ENCODE measurements at regions of chr2 and their contacts with region 1.

Region 1: DNA sequence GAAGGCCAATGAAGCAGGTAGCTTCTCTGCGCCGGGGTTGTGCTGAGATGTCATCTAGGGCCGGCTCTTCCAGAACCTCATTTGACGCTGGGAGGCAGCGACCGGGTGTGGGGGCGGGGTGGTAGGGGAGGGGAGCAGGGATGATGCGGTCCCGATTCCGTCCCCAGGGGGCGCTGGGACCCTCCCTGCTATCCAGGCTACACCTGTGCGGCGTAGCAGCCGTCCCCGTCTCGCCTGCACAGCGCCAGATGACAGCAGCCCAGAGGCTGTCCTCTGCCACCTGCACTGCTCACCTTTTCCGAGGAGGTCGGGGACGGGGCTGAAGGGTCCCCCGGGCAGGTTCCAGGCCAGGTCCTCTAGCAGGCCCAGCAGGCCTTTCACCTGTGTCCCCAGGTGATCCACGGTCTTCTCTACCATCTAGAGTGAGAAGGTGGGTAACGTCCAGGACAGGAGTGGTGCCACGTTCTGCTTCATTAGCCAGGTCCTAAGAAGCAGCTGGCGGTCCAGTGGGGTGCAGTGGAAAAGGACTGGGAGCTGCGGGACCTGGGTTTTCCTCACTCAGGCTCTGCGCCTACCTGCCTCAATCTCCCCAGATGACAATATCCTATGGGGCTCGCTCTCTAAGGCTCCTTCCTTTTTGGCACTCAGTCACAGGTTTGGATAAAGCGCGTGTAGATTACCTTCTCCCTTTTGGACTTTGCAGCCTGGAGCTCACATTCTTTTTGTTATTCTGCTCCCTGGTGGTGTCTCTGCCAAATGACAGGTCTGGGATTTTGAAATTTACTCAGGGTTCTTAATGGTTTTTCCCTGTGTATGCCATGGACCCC is 56.0 kb upstream of the RAB6C start:
- DNase-seq: peak; percentile 82
- H3K4me3 ChIP-seq: peak overlapping the region in 1 of 2 experiments; percentile 28; a peak in 1 of 4 replicates
- H3K27ac ChIP-seq: no peak overlapping the region
- H3K4me1 ChIP-seq: peaks cover 0 to 11% of the 10 kb centered on the region in 2 experiments; a peak in 1 of 4 replicates
- H3K27me3 ChIP-seq: no peaks in the 10 kb centered on the region
- CTCF ChIP-seq: peak; percentile 56
- EP300 ChIP-seq: no peak
- RAD21 ChIP-seq: peak; percentile 84

Region 2: DNA sequence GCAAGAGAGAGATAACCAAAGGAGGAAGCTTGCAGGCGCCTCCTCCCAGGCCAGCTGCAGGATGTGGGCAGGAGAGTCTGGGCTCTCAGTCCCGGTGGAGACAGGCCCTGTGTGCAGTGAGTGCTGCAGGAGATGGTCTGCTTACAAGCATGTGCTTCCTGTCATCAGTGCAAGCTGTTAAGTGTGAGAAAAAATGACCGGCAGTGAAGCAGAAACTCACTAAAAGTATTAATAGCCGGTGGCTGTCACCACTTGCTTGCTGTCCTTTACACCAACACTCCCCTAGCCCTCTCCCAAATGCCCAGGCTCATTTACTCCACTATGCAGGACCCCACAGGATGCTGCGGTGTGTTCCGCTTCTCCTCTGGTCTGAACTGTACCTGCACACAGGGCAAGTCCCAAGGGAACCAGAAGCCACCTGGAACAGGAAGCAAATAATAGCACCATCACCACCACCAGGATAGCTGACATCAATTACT is 1169.2 kb before region 1 on chr2:
- CTCF ChIA-PET with region 1: interaction called, 10 read pairs
- POLR2A ChIA-PET with region 1: no interaction called
- DNase-seq: peak; percentile 48
- H3K4me3 ChIP-seq: no peak overlapping the region
- H3K27ac ChIP-seq: no peak overlapping the region
- H3K4me1 ChIP-seq: peaks cover 0 to 11% of the 10 kb centered on the region in 2 experiments; a peak in 1 of 4 replicates
- H3K27me3 ChIP-seq: no peaks in the 10 kb centered on the region
- CTCF ChIP-seq: no peak
- EP300 ChIP-seq: no peak
- RAD21 ChIP-seq: no peak

Region 3: DNA sequence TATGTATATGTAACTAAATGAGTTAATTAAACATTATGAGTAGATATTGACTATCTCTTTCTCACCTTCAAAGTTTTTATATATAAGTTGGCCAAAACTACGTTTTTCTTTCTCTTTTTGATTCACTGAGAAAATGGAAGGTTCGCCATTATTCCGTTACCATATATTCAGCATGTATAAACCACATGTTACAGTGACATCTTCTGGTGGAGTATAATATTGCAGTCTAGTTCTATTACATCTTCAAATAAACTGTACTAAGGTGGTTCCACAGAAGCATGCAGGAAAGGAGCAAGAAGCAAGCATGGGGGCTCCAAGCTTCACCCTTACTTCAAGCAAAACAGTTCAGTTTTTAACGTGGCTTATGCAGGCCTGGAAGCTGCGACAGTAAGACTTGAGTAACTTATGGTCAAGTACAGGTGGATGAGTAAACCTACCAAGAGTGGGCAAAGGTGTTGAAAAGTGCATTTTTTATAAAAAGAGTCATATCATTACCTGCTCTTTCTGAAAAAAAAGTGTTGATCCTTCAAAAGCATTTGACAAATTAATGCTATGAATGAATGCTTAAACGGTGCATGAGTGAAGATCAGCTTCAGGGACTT is 73.8 kb before region 1 on chr2:
- CTCF ChIA-PET with region 1: interaction called, 10 read pairs
- POLR2A ChIA-PET with region 1: no interaction called
- DNase-seq: peak; percentile 60
- H3K4me3 ChIP-seq: peak overlapping the region in 1 of 2 experiments; percentile 20; a peak in 1 of 4 replicates
- H3K27ac ChIP-seq: no peak overlapping the region
- H3K4me1 ChIP-seq: no peaks in the 10 kb centered on the region
- H3K27me3 ChIP-seq: no peaks in the 10 kb centered on the region; the same call in 1 of the 2 replicates
- CTCF ChIP-seq: peak; percentile 78
- EP300 ChIP-seq: no peak
- RAD21 ChIP-seq: peak; percentile 90

Region 4: DNA sequence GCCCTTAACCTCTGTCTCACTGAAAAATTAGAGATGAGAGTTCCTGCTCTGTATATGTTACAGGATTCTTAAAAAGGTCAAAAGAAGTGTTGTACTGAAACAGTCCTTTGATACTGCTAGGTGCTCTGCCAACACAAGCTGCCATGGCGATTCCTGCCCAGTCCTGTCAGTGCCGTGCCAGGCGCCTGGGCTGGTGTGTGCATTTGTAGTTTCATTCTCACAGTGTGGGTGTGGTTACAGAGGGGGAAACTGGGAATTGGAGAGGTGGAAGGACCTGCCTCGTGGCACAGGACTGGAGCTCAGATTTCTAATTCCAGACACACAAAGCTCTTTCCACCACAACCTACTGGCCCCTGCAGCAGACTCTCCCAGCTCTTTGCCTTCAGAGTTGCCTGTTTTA is 66.3 kb before region 1 on chr2:
- CTCF ChIA-PET with region 1: interaction called, 26 read pairs
- POLR2A ChIA-PET with region 1: no interaction called
- DNase-seq: no peak
- H3K4me3 ChIP-seq: no peak overlapping the region
- H3K27ac ChIP-seq: no peak overlapping the region
- H3K4me1 ChIP-seq: peaks cover 0 to 18% of the 10 kb centered on the region in 2 experiments; a peak in 2 of 4 replicates
- H3K27me3 ChIP-seq: no peaks in the 10 kb centered on the region
- CTCF ChIP-seq: no peak
- EP300 ChIP-seq: no peak
- RAD21 ChIP-seq: no peak

Region 5: GRCh38 chr2:129877795-129878775 is 45.4 kb before region 1 on chr2:
- CTCF ChIA-PET with region 1: interaction called, 11 read pairs
- POLR2A ChIA-PET with region 1: no interaction called
- DNase-seq: no peak
- H3K4me3 ChIP-seq: peak overlapping the region; percentile 52 to 57
- H3K27ac ChIP-seq: peak overlapping the region in 1 of 2 experiments; percentile 71; a peak in 2 of 4 replicates
- H3K4me1 ChIP-seq: peaks cover 0 to 13% of the 10 kb centered on the region in 2 experiments; a peak in 1 of 4 replicates
- H3K27me3 ChIP-seq: no peaks in the 10 kb centered on the region
- CTCF ChIP-seq: no peak
- EP300 ChIP-seq: no peak
- RAD21 ChIP-seq: no peak